Activated CD4-positive, alpha-beta T cell treated with anti-CD3 and anti-CD28 coated beads for 36 hours (primary cell): ENCODE measurements at regions of chr1 and their contacts with region 1.

Region 1: DNA sequence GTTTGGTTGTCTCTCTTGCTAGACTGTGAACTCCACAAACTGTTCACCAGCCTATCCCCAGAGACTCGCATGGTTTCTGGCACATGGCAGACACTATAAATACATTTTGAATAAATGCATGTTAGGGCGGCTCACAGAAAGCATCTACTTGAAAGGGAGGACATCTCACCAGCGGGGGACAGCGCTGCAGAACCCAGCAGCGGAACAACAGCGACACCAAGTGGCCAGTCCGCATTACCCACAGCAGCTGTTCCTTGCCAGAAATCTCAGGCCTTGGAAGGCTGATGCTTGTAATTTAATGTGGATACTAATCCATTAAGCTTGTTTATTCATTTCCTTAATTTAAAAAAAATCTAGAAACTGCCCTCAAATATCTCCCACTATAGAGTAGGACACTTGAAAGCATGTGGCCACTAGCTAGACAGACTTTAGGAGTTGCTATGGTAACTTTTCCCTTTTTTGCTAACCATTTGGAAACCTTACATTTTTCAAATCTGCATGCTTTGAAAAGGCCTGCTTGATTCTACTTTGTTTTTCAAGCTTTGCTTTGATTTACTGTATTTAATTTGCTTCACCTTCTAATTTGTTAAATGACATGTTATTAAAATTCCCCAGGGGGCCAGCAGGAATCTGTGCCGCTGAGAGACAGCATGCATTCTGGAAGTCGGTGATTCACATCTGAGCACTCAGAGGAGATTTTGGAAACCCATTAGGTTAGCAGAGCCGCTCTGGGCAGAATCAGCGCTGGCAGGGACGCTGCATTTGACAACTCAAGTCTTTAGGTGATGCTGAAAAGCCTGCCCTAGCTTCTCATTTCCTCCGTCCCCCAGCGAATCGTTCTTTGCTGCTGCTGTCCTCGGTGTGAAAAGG is 63.5 kb upstream of the SSX2IP start:
- DNase-seq: peak; percentile 88
- ATAC-seq: peak; percentile 87
- H3K4me3 Mint-ChIP-seq: no peak overlapping the region
- H3K27ac Mint-ChIP-seq: no peak overlapping the region
- H3K4me1 Mint-ChIP-seq: peaks cover 14% of the 10 kb centered on the region
- H3K27me3 Mint-ChIP-seq: peaks cover 10% of the 10 kb centered on the region

Region 2: GRCh38 chr1:83905315-83905907 is 848.3 kb before region 1 on chr1:
- CTCF ChIA-PET with region 1: interaction called, 4 read pairs
- POLR2A ChIA-PET with region 1: no interaction called
- intact Hi-C with region 1: loop called (anchors 1 to 10 kb)
- DNase-seq: no peak
- ATAC-seq: no peak
- H3K4me3 Mint-ChIP-seq: no peak overlapping the region
- H3K27ac Mint-ChIP-seq: no peak overlapping the region
- H3K4me1 Mint-ChIP-seq: no peaks in the 10 kb centered on the region
- H3K27me3 Mint-ChIP-seq: peaks cover 8% of the 10 kb centered on the region

Region 3: DNA sequence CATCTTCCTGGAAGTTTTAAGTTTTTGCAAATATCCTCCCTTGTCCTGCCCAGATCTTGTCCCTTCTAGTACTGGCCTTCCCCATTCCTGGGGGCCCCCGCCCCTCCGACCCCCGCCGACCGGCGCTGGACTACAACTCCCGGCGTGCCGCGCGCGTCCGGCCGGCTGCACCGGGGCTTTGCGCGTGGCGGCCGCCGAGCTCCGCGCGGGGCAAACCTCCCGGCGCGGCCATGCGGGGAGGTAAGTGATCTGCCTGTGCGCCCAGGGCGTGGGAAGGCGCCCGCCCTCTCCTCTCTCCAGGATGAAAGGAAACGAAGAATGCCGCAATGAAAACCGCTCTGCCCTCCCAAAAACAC is 455.4 kb before region 1 on chr1:
- CTCF ChIA-PET with region 1: no interaction called
- POLR2A ChIA-PET with region 1: no interaction called
- intact Hi-C with region 1: loop called in 1 of 2 experiments (anchors 5 kb)
- DNase-seq: peak; percentile 71
- ATAC-seq: peak; percentile 79
- H3K4me3 Mint-ChIP-seq: peak overlapping the region; percentile 78
- H3K27ac Mint-ChIP-seq: peak overlapping the region; percentile 71
- H3K4me1 Mint-ChIP-seq: peaks cover 34% of the 10 kb centered on the region
- H3K27me3 Mint-ChIP-seq: peaks cover 6% of the 10 kb centered on the region

Region 4: GRCh38 chr1:84442256-84442655 is 311.5 kb before region 1 on chr1:
- CTCF ChIA-PET with region 1: interaction called, 29 read pairs
- POLR2A ChIA-PET with region 1: no interaction called
- intact Hi-C with region 1: loop called (anchors 1 kb)
- DNase-seq: no peak
- ATAC-seq: peak; percentile 99
- H3K4me3 Mint-ChIP-seq: no peak overlapping the region
- H3K27ac Mint-ChIP-seq: no peak overlapping the region
- H3K4me1 Mint-ChIP-seq: peaks cover 23% of the 10 kb centered on the region
- H3K27me3 Mint-ChIP-seq: peaks cover 5% of the 10 kb centered on the region

Region 5: DNA sequence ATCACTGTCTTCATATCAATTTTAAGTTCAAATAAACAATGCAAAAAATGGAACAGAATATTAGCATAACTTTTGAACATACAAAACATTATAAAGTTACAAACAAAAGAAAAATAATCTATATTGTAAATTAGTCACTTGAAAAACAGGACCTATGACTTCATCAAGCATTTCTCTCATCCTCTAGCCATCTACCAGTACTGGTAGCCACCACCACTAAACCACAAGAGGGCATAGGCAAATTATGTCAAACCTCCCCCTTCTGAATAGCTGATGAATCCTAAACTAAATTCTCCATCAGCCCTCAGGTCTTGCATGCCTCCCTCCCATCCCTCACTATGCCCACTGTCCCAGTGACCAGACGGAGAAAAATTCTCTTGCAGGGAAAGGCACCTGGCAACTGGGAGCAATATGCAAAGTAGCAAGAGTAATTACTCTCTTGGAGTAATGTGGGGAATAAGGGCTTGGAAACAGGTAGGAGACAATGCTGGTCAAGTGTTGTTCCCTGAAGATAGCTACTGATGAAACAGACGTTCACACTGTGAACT is 100.5 kb before region 1 on chr1:
- CTCF ChIA-PET with region 1: interaction called, 13 read pairs
- POLR2A ChIA-PET with region 1: no interaction called
- intact Hi-C with region 1: no loop called
- DNase-seq: no peak
- ATAC-seq: no peak
- H3K4me3 Mint-ChIP-seq: no peak overlapping the region
- H3K27ac Mint-ChIP-seq: no peak overlapping the region
- H3K4me1 Mint-ChIP-seq: no peaks in the 10 kb centered on the region
- H3K27me3 Mint-ChIP-seq: no peaks in the 10 kb centered on the region

Region 6: GRCh38 chr1:84704872-84705426 is 48.8 kb before region 1 on chr1:
- CTCF ChIA-PET with region 1: no interaction called
- POLR2A ChIA-PET with region 1: no interaction called
- intact Hi-C with region 1: no loop called
- DNase-seq: no peak
- ATAC-seq: no peak
- H3K4me3 Mint-ChIP-seq: no peak overlapping the region
- H3K27ac Mint-ChIP-seq: no peak overlapping the region
- H3K4me1 Mint-ChIP-seq: peaks cover 6% of the 10 kb centered on the region
- H3K27me3 Mint-ChIP-seq: no peaks in the 10 kb centered on the region

Region 7: GRCh38 chr1:84763912-84764663 is 10.3 kb after region 1 on chr1:
- CTCF ChIA-PET with region 1: interaction called, 10 read pairs
- POLR2A ChIA-PET with region 1: no interaction called
- intact Hi-C with region 1: no loop called
- DNase-seq: no peak
- ATAC-seq: no peak
- H3K4me3 Mint-ChIP-seq: no peak overlapping the region
- H3K27ac Mint-ChIP-seq: no peak overlapping the region
- H3K4me1 Mint-ChIP-seq: peaks cover 4% of the 10 kb centered on the region
- H3K27me3 Mint-ChIP-seq: peaks cover 16% of the 10 kb centered on the region

Region 8: GRCh38 chr1:84795213-84795612 is 41.5 kb after region 1 on chr1:
- CTCF ChIA-PET with region 1: no interaction called
- POLR2A ChIA-PET with region 1: no interaction called
- intact Hi-C with region 1: no loop called
- DNase-seq: no peak
- ATAC-seq: no peak
- H3K4me3 Mint-ChIP-seq: no peak overlapping the region
- H3K27ac Mint-ChIP-seq: no peak overlapping the region
- H3K4me1 Mint-ChIP-seq: no peaks in the 10 kb centered on the region
- H3K27me3 Mint-ChIP-seq: peaks cover under 1% of the 10 kb centered on the region

Region 9: DNA sequence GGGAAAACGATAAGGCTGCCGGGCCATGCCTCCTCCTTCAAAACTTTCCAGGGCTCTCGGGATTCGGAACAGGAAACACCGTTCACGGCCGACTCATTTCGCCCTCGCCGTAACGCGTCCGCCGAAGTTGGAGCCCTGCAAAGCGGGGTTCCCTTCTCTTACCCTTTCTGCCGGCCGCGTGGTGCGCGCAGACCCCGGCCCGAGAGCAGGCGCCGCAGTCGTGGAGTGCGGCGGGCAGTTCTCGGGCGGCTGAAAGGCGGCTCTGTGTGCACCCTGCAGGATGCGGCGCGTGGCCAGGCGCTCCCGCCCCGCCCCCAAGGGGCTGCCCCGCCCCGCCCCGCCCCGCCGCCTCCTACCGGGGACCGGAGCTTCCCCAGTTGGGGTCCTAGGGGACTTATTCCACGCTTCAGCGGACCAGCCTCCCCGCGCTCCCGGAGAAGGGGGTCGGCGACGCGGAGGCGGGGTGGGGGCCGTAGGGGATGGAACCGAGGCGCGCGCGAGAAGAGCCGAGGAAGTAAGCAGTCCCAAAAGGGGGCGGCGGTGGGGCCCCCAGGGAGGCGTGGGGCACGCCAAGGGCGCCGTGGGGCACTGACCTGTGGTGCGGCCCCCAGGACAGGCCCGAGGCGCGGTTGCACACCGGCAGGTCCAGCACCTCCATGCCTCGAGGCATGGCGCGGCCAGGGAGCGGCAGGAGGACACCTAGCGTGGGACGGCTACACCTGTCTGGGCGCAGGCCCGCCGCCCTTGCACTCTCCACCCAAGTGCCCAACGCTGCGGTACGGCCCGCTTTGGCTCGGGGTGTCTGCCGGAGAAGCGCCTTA is 243.3 kb after region 1 on chr1 and contains the start of gene MCOLN2:
- CTCF ChIA-PET with region 1: no interaction called
- POLR2A ChIA-PET with region 1: no interaction called
- intact Hi-C with region 1: no loop called
- DNase-seq: peak; percentile 75
- ATAC-seq: peak; percentile 54
- H3K4me3 Mint-ChIP-seq: peak within 1 kb of the TSS; percentile 80
- H3K27ac Mint-ChIP-seq: peak within 1 kb of the TSS; percentile 81
- H3K4me1 Mint-ChIP-seq: peaks cover 45% of the 10 kb centered on the region
- H3K27me3 Mint-ChIP-seq: peaks cover 22% of the 10 kb centered on the region
- total RNA-seq, gene MCOLN2: 32.9 to 43.5 TPM

Region 10: DNA sequence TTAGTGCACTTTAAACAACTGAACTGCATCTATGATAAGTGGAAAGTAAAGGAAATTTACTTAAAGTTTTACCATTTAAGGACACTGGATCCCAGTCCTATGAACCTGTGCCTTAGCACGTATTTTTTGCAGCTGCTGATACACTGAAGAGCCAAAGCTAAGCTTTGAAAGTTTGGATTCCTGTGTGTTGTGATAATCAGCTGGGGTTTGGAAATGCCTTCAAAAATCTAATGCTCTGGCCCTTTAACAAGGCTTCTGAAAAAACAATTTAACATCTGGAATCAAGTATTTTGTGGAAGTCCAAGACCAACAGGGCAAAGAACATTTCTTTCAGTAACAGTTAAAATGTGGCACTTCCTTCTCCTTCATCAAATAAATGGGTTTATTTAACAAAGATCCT is 659.4 kb after region 1 on chr1:
- CTCF ChIA-PET with region 1: no interaction called
- POLR2A ChIA-PET with region 1: no interaction called
- intact Hi-C with region 1: no loop called
- DNase-seq: no peak
- ATAC-seq: no peak
- H3K4me3 Mint-ChIP-seq: no peak overlapping the region
- H3K27ac Mint-ChIP-seq: no peak overlapping the region
- H3K4me1 Mint-ChIP-seq: no peaks in the 10 kb centered on the region
- H3K27me3 Mint-ChIP-seq: peaks cover 4% of the 10 kb centered on the region